Activated T-helper 2 cell treated with anti-CD3 and anti-CD28 coated beads, Interferon-gamma antibody, Interleukin-2, Interleukin-4, amounts not matched to agents 10 μg/mL and 5 μg/mL and 100 μg/mL, durations not matched to agents 14 hours and 24 hours and 36 hours (primary cell): ENCODE measurements at regions of chr9 and their contacts with region 1.

Region 1: DNA sequence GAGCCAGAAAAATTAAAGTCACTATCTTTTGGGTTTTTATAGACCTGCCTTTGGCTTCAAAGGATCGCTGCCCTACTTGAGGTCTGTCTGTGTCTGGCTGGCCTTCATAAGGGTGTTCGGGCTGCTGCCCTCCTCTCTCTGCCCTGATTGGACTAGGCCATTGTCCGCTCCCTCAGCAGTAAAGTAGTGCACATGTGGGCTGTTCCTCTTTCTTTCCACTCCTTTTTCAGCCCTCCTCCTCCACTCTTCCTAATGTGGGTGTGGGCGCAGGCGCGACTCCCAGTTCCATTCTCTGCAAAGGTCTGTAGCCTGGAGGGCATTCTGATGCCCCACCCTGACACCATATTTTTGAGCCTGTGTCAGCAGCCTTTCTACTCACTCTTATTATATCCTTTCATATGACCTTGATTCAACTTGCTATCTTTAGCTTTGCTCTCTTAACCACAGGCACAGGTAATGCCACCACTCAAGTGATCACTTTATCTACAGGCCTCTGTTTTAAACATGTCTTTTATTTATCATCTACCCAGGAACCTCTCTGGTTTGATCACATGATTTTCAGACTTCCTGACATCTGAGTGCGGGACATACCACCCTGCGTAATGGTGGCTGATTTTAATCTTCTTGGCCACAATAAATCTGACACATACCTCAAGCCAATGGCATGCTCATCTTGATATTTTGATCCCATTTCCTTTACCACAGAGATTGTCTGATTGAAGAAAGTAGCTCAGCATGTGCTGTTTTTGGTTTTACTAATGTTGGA is 144.5 kb downstream of the AOPEP start:
- DNase-seq: peak; percentile 44
- H3K4me3 Mint-ChIP-seq: peak overlapping the region; percentile 51
- H3K27ac Mint-ChIP-seq: peak overlapping the region; percentile 76
- H3K4me1 Mint-ChIP-seq: peaks cover 50% of the 10 kb centered on the region
- H3K27me3 Mint-ChIP-seq: peaks cover 46% of the 10 kb centered on the region

Region 2: DNA sequence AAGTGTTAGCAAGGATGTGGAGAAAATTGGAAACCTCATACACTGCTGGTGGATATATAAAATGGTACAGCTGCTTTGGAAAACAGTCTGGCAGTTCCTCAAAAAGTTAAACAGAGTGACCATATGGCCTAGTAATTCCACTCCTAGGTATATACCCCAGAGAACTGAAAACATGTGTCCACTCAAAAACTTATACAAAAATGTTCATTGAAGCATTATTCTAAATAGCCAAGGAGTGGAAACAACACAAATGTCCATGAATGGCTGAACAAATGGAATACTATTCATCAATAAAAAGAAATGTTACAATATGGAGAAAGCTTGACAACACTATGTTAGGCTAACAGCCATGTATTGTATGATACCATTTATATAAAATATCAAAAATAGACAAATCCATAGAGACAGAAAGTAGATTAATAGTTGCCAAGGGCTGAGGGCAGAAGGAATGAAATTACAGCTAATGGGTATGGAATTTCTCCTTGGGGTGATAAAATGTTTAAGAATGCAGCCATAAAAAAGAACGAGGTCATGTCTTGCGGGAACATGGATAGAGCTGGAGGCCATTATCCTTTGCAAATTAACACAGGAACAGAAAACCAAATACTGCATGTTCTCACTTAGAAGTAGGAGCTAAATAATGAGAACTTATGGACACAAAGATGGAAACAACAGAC is 198.0 kb before region 1 on chr9:
- intact Hi-C with region 1: loop called (anchors 5 kb)
- DNase-seq: no peak
- H3K4me3 Mint-ChIP-seq: no peak overlapping the region
- H3K27ac Mint-ChIP-seq: no peak overlapping the region
- H3K4me1 Mint-ChIP-seq: peaks cover 11% of the 10 kb centered on the region
- H3K27me3 Mint-ChIP-seq: peaks cover 42% of the 10 kb centered on the region

Region 3: DNA sequence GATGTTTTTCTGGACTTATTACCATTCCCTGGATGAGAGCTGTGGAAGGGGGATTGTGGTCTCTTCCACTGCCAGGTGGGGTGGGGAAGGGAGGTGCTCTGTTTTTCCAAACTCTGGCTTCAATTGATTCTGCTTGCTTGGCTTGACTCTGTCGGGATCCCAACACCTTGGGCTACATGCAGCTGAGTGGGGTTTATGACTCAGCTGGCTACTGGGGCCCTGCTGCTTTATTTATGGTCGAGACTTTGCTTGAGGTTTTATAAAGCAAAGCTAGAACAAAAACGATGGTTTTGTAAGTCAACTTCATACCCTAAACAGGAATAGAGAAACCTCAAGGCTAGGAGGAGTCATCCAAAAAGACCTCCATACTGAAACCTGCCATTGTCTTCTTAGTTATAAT is 68.2 kb before region 1 on chr9:
- intact Hi-C with region 1: loop called (anchors 5 kb)
- DNase-seq: no peak
- H3K4me3 Mint-ChIP-seq: no peak overlapping the region
- H3K27ac Mint-ChIP-seq: no peak overlapping the region
- H3K4me1 Mint-ChIP-seq: peaks cover 22% of the 10 kb centered on the region
- H3K27me3 Mint-ChIP-seq: peaks cover 2% of the 10 kb centered on the region

Region 4: DNA sequence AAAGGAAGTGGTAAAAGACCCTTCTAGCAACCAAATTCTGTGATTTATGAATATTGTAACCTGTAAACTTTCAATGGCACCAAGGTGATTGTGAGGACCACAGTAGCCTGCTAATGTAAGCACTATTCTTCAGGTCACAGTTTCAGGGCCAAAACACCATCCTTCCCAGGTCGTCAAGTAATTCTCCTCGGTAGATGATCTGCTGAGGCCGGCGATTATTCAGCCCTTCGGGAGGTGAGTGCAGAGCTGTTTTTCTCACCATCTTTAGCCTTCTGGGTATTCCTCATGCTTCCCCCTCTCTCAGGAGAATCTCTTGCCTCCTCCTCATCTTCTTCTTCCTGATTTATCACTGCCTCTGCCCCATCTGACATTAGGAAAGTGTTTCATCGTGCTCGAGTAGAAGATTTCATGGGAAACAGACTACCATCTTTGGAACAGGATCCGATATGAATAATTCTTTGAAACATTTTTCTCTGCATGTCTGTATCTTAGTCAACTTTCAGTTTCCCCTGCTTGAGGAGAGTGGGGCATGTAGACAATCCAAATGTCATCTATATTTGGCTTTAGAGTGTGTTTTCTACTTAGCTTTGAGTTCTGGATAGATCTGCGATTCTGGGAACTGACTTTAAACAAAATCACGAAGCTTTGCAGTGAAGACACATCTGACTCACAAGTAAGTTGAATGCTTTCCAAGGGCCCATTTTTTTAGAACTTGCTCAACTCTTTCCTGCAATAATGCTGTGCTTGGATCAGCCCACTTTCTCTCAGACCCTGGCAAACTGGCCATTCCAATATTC is 29.4 kb after region 1 on chr9:
- intact Hi-C with region 1: loop called (anchors 1 kb)
- DNase-seq: no peak
- H3K4me3 Mint-ChIP-seq: no peak overlapping the region
- H3K27ac Mint-ChIP-seq: peak overlapping the region; percentile 55
- H3K4me1 Mint-ChIP-seq: peaks cover 26% of the 10 kb centered on the region
- H3K27me3 Mint-ChIP-seq: peaks cover 9% of the 10 kb centered on the region

Region 5: GRCh38 chr9:94993064-94993833 is 122.3 kb after region 1 on chr9:
- intact Hi-C with region 1: no loop called
- DNase-seq: no peak
- H3K4me3 Mint-ChIP-seq: no peak overlapping the region
- H3K27ac Mint-ChIP-seq: no peak overlapping the region
- H3K4me1 Mint-ChIP-seq: no peaks in the 10 kb centered on the region
- H3K27me3 Mint-ChIP-seq: no peaks in the 10 kb centered on the region

Region 6: DNA sequence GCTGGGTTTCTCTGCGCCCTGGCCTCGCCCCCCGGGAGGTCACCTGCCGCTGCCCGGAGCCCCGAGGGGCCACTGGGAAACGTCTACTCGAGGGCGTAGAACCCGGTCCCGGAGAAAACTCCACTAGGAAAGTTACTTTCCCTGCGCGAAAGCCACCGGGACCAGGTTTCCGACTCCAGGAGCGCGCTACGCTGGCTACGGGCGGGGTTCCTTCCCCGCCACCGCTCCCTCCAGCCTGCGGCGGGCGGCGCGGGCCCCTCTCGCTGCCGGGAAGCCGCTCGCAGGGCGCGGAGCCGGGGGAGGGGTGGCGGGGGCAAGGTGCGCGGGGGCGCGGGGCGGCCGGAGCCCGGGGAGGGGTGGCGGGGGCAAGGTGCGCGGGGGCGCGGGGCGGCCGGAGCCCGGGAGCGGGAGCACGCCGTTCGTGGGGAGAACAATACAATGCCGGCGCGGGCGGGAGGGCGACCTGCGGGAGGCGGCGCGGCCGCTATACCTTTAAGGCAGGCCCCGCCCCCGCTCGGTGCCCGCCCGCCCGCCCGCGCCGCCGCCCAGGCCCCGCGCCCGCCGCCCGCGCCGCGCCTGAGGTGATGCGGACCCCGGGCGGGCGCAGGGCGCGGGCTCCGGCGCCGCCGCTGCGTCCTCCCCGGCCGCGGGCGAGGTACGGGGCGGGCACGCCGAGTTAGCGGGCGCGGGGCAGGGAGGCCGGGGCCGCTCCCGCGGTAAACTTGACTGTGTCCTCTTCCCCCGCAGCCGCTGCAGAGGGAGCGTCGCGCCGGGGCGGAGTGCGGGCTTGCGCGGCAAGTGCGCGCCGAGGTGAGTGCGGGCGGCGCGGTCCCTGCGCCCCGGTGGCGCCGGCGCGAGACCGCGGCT is 133.7 kb after region 1 on chr9:
- intact Hi-C with region 1: loop called (anchors 1 kb)
- DNase-seq: peak; percentile 36
- H3K4me3 Mint-ChIP-seq: peak overlapping the region; percentile 82
- H3K27ac Mint-ChIP-seq: no peak overlapping the region
- H3K4me1 Mint-ChIP-seq: peaks cover 36% of the 10 kb centered on the region
- H3K27me3 Mint-ChIP-seq: peaks cover 29% of the 10 kb centered on the region